ENCODE measurements at regions of chr11 and their contacts with region 1.

Region 1: DNA sequence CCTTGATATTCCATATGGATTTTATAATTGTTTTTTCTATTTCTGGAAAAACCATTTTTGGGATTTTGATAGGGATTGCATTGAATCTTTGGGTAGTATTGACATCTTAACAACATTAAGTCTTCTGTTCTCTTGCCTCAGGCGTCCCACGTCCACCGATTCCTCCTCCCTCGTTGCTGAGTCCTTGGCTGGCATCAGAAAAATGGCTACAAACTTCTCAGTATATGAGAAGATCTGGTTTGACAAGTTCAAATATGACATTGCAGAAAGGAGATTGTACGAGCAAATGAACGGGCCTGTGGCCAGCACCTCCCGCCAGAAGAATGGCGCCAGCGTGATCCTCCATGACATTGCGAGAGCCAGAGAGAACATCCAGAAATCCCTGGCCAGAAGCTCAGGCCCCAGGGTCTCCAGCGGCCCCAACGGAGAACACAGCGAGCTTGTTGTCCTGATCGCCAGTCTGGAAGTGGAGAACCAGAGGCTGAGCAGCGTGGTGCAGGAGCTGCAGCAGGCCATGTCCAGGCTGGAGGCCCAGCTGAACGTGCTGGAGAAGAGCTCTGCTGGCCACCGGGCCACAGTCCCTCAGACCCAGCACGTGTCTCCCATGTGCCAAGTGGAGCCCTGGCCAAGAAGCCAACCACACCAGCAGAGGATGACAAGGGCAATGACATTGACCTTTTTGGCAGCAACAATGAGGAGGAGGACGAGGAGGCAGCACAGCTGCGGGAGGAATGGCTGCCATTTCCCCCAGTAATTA is 20.7 kb upstream of the SCGB1D1 start:
- DNase-seq: peak; percentile 76
- ATAC-seq: peak; percentile 59

Region 2: GRCh38 chr11:62081378-62082291 is 87.6 kb before region 1 on chr11:
- intact Hi-C with region 1: no loop called
- DNase-seq: peak; percentile 92
- ATAC-seq: peak; percentile 74

Region 3: GRCh38 chr11:62315431-62315830 is 146.2 kb after region 1 on chr11:
- intact Hi-C with region 1: loop called (anchors 1 kb)
- DNase-seq: no peak
- ATAC-seq: no peak

Region 4: DNA sequence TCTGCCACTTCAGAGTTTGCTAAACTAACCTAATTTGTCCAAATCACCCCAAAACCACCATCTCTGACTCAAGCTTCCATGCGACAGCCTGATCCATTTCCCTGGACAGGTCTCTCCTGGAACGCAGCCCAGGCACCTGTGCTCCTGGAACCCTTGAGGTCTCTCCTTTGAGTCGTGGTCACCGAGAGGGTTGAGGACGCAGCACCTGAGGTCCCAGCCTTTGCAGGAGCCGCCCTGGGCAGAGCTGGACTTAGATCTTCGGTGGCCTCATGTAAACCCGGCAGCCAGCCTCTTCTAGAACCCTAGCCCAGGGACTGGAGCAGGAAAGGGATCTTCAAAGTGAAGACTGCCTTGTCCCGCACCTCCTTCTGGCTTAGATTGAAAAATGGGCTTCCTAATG is 205.5 kb after region 1 on chr11:
- intact Hi-C with region 1: loop called (anchors 5 kb)
- DNase-seq: no peak
- ATAC-seq: no peak